ENCODE measurements at regions of chr22 and their contacts with region 1.

Region 1: DNA sequence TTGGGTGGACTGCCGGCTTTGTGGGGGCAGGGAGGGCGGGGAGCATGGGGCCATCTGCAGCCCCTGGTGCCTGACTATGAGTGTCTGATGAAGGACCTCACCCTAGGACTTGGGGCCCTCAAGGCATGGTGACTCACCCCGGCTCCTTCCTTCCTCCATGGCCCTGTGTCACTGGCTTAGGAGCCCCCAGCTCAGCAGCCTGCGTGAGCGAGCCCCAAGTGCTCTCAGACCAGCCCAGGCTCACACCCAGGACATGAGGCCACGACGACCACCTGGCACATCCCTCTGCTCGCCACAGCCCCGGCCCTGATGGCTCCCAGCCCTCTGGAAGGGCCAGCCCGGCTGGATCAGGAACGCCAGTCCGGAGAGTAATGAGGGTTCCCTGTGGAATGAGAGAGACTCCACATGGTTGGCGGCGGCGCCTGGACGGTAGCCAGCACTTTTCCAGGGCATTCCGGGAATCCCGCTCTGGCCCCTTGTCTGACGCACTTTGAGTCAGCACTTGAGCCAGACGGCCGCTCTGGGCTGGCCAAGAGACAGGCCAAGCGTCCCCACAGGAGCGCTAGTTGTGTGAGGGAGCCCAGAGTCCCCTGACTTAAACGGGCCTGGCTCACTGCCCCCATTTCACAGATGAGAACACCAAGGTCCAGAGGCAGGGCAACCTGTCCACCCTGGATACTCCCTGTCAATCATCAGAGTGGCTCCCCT is 50.7 kb upstream of the SHISAL1 start:
- DNase-seq: peak; percentile 85
- H3K4me3 ChIP-seq: no peak overlapping the region
- H3K27ac ChIP-seq: peak overlapping the region; percentile 94
- H3K4me1 ChIP-seq: peaks cover 22% of the 10 kb centered on the region
- H3K27me3 ChIP-seq: no peaks in the 10 kb centered on the region
- CTCF ChIP-seq: no peak
- POLR2A ChIP-seq: no peak

Region 2: DNA sequence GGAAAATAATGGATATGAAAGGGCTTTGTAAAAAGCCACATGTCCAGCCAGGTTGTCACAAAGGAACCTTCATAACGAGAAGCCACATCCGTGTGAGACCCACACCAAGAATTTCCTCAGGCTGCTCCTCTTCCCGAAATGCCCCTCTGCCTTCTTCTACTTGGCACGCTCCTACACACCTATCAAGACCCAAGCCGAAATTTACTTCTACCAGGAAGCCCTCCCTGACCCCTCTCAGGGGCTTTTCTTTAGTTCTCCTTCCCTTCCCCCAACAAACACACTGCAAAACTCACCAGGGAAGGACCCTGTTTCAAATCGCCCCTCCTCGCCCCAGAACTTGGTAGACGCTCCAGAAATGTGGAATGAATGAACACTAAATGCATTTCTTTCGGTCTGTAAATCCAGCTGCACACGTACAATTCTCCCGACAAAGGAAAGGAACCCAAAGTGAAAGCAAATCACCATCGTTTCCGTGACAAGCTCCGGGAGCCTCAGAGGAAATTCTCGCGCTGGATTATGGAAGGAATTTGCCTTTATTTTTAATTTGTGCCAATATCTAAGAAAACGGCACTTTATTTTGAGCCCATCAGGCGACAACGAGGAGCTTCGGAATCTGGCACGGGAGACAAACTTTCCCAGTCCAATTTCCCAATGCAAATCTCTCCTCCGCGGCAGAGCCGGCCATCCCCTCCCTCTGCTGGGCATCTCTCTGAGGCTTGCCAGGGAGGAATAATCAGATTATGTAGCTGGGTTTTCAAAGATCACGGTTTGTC is 37.5 kb before region 1 on chr22:
- CTCF ChIA-PET with region 1: no interaction called
- POLR2A ChIA-PET with region 1: no interaction called
- dilution Hi-C with region 1: no loop called
- intact Hi-C with region 1: no loop called
- DNase-seq: peak; percentile 56
- H3K4me3 ChIP-seq: peak overlapping the region; percentile 42 to 89 (median 84)
- H3K27ac ChIP-seq: no peak overlapping the region
- H3K4me1 ChIP-seq: no peaks in the 10 kb centered on the region
- H3K27me3 ChIP-seq: peaks cover 16 to 23% of the 10 kb centered on the region in 2 experiments
- CTCF ChIP-seq: peak in 1 of 2 donors; percentile 27
- POLR2A ChIP-seq: no peak

Region 3: DNA sequence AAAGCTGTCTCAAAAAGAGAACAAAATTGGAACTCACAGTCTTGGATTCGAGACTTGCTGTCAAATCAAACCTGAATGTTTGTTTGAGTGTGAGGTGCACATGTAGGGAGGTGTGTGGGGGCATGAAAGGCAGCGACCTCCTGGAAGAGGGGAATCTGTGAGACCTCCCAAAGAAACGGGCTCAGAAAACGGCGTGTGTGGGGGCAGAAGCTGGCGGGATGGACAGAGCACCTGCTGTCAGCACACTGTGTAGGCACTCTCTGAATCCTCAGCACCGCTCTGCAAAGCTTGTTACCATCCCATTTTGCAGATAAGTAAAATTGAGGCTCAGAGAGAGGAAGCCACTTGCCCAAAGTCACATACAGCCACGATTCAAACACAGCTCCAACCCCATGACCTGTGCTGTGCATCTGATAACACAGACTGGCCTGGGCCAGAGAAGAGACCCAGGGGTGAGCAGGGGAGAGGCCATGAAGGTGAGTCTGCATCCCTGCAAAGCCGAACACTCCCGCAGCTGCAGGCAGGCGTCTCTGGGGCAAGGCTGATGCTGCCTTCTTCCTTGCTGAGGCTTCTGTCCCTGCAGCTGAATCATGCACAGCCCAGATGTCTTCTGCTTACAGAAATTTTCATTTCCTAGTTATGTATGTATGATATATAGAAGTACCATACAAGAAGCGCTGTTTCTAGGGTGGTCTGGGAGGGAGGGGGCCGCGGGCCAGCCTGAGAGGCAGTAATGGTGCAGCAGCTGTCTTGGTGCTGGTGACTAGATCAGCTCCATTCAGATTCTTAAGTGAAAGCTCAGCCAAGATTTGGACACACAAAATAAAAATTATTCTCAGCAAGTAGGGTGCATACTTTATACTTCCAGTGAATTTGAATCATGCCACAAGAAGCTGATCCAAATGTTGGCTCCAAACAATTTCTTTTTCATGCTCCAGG is 16.7 kb after region 1 on chr22:
- CTCF ChIA-PET with region 1: interaction called, 3 read pairs
- POLR2A ChIA-PET with region 1: no interaction called
- dilution Hi-C with region 1: no loop called
- intact Hi-C with region 1: loop called (anchors 1 kb)
- DNase-seq: no peak
- H3K4me3 ChIP-seq: no peak overlapping the region
- H3K27ac ChIP-seq: no peak overlapping the region
- H3K4me1 ChIP-seq: no peaks in the 10 kb centered on the region
- H3K27me3 ChIP-seq: no peaks in the 10 kb centered on the region
- CTCF ChIP-seq: no peak
- POLR2A ChIP-seq: no peak

Region 4: GRCh38 chr22:44625981-44626687 is 262.7 kb after region 1 on chr22:
- CTCF ChIA-PET with region 1: no interaction called
- POLR2A ChIA-PET with region 1: no interaction called
- dilution Hi-C with region 1: no loop called
- intact Hi-C with region 1: loop called (anchors 10 kb)
- DNase-seq: peak; percentile 62
- H3K4me3 ChIP-seq: no peak overlapping the region
- H3K27ac ChIP-seq: no peak overlapping the region
- H3K4me1 ChIP-seq: no peaks in the 10 kb centered on the region
- H3K27me3 ChIP-seq: no peaks in the 10 kb centered on the region
- CTCF ChIP-seq: peak; percentile 85 to 88
- POLR2A ChIP-seq: no peak

Measured in endothelial cell of umbilical vein (primary cell).